ENCODE measurements at regions of chr1 and their contacts with region 1.

Region 1: GRCh38 chr1:16960560-16961296 is 19.7 kb downstream of the MFAP2 start:
- DNase-seq: no peak
- H3K4me3 ChIP-seq: peak overlapping the region; percentile 48
- CTCF ChIP-seq: peak; percentile 90

Region 2: DNA sequence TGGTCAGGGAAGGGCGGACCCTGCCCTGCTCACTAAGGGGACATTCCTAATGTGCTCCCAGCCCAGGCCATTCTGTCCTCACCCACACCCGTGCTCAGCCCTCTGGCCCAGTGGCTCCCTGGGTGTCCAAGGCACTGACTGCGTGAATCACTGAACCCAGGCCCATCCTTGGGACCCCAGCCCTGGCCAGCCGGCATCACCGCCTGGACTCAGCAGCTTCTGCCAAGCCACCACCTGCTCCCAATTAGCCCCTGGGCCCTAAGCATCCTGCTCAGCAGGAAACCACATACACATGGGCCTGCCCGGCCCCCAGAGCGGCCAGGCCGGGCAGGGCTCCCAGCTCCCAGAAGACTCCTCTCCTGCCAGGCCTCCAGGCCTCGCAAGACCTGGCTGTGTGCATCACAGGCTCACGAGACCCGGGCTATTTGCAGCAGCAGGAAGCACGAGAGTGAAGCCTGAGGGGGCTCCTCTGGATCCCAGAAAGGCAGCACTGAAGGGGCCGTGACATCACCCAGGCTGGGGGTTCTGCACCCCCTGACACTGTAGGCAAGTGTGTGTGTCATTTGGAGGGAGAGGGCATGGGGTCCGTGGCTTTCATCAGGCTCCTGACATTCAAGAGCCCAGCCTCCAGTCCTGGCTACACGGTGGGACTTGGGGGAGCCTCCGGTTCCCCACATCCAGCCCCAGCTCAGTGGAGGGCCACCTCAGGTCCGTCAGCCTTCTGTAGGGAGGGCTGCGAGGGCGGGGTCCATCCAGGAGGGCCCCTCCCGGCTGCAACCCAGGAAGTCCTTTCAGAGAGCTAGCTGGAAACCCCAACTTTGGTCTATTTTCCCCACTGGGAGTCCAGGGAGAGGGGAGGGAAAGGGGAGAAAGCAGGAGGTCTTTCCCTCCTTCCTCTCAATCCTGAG is 18.1 kb after region 1 on chr1:
- CTCF ChIA-PET with region 1: interaction called, 38 read pairs
- POLR2A ChIA-PET with region 1: interaction called, 10 read pairs
- DNase-seq: peak; percentile 84
- H3K4me3 ChIP-seq: peak overlapping the region; percentile 76
- CTCF ChIP-seq: no peak

Region 3: GRCh38 chr1:17032741-17033140 is 72.0 kb after region 1 on chr1:
- CTCF ChIA-PET with region 1: interaction called, 10 read pairs
- POLR2A ChIA-PET with region 1: interaction called, 3 read pairs
- DNase-seq: no peak
- H3K4me3 ChIP-seq: no peak overlapping the region
- CTCF ChIP-seq: no peak

Region 4: GRCh38 chr1:17053685-17054410 is 93.1 kb after region 1 on chr1 and contains the start of gene SDHB:
- CTCF ChIA-PET with region 1: interaction called, 447 read pairs
- POLR2A ChIA-PET with region 1: no interaction called
- DNase-seq: peak; percentile 77
- H3K4me3 ChIP-seq: peak within 1 kb of the TSS; percentile 94
- CTCF ChIP-seq: no peak

Measured in AG04449 (cell line).